Right ventricle myocardium inferior (tissue), 1 donor: ENCODE measurements at regions of chr1 and their contacts with region 1.

Region 1: DNA sequence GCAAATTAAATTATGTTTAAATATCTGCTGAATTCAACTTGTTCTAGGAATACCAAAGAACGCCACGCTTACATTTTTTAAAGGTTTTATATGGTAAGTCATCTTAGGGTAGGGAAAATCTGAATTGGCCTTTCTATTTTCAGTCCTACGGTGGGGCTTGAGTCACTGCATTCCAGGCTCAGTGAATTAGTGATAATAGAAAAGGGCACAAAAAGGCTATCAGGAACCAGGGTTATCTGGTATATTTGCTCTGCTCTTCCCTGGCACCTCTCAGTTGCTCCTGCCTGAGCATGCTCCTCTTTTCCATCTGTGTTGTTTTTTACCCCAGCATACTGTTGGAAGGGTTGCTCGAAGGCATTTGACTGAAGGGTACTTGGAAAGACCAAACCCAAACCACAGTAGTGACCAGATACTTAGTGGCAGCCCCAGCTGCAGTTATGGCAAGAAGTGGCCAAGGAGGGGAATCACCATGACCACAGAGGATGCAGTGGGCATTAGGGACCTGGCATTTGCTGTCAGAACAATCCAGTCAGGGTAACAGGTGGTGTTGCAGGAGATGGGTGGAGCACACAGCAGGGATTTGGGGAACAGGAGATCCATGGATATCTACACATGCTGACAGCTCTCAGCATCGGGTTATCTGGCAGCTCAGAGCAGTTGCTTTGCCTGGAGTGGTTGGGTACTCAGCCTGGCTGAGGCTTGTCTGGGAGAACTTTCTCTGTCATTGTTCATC is 2.3 kb downstream of the OVAAL start:
- DNase-seq: no peak
- ATAC-seq: peak; percentile 21

Region 2: GRCh38 chr1:180542838-180543145 is 18.2 kb before region 1 on chr1:
- intact Hi-C with region 1: loop called (anchors 2 kb)
- DNase-seq: no peak
- ATAC-seq: no peak